Endothelial cell of umbilical vein (primary cell): ENCODE measurements at regions of chr6 and their contacts with region 1.

Region 1: DNA sequence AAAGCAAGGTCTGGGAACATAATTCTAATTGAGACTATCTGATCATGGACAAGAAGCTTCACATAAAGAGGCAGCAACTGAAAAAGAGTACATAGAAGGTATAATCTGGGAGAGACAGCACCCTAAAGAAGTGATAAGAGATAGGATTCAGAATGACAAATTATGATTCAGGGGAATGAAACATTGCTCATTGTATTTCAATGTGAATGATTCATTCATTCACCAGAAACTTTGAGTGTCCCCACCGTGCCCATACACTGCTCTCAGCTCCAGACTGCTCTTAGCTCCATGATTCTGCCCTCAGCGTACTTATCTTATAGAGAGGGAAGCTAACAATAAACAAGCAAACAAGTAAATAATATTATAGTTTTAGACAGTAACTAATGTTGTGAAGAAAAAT is 329.3 kb upstream of the IRAK1BP1 start:
- DNase-seq: peak; percentile 27
- H3K4me3 ChIP-seq: no peak overlapping the region
- H3K27ac ChIP-seq: no peak overlapping the region
- H3K4me1 ChIP-seq: peaks cover 23% of the 10 kb centered on the region
- H3K27me3 ChIP-seq: no peaks in the 10 kb centered on the region
- CTCF ChIP-seq: no peak
- POLR2A ChIP-seq: no peak

Region 2: DNA sequence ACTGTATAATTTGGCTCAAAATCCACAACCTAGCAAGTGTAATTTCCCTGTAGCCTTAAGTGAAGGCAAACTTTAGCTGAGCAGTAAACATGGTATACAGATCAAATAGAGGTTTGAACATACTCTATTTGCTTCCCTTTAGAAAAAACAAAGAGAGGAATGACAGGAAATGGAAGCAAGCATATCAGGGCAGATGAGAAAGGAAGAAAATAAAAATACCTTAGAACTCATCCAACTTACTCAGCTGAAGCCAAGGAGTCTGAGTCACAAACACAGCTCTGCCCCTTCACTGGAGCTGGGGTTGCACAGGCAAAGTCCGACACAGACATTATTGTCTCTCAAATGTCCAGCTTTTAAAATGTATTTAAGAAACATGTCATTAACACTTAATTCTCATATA is 50.6 kb before region 1 on chr6:
- CTCF ChIA-PET with region 1: no interaction called
- POLR2A ChIA-PET with region 1: no interaction called
- dilution Hi-C with region 1: no loop called
- intact Hi-C with region 1: loop called (anchors 5 kb)
- DNase-seq: peak; percentile 59
- H3K4me3 ChIP-seq: no peak overlapping the region
- H3K27ac ChIP-seq: no peak overlapping the region
- H3K4me1 ChIP-seq: peaks cover 50% of the 10 kb centered on the region
- H3K27me3 ChIP-seq: no peaks in the 10 kb centered on the region
- CTCF ChIP-seq: no peak
- POLR2A ChIP-seq: no peak

Region 3: DNA sequence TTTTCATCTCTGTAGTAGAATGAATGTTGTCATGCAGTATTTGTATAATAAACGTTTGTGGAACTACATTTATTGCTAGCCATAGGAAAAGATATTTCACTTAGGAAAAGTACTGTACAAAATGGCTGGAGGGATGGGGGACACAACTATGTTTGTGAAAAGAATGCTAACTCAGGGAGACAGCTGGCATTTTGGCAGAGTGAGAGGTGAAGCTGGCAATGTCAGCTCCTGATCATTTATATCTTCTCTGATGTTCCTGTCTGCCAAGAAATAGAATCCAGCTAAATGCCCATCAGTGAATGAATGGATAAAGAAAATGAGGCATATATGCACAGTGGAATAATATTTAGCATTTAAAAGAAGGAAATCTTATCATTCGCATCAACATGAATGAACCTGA is 16.3 kb after region 1 on chr6:
- CTCF ChIA-PET with region 1: interaction called, 4 read pairs
- POLR2A ChIA-PET with region 1: no interaction called
- dilution Hi-C with region 1: no loop called
- intact Hi-C with region 1: loop called (anchors 2 kb)
- DNase-seq: no peak
- H3K4me3 ChIP-seq: no peak overlapping the region
- H3K27ac ChIP-seq: no peak overlapping the region
- H3K4me1 ChIP-seq: no peaks in the 10 kb centered on the region
- H3K27me3 ChIP-seq: no peaks in the 10 kb centered on the region
- CTCF ChIP-seq: no peak
- POLR2A ChIP-seq: no peak